H1 (cell line): ENCODE measurements at regions of chr6 and their contacts with region 1.

Region 1: GRCh38 chr6:87641065-87641692 is 51.2 kb downstream of the ORC3 start:
- DNase-seq: no peak
- H3K4me3 ChIP-seq: no peak overlapping the region
- H3K27ac ChIP-seq: no peak overlapping the region
- H3K4me1 ChIP-seq: peaks cover 0 to 3% (median 0%) of the 10 kb centered on the region in 4 experiments; a peak in 1 of 7 replicates
- H3K27me3 ChIP-seq: no peaks in the 10 kb centered on the region
- CTCF ChIP-seq: no peak
- EP300 ChIP-seq: no peak
- POLR2A ChIP-seq: no peak
- RAD21 ChIP-seq: no peak

Region 2: GRCh38 chr6:87487555-87487954 is 153.6 kb before region 1 on chr6:
- CTCF ChIA-PET with region 1: no interaction called
- POLR2A ChIA-PET with region 1: no interaction called
- DNase-seq: no peak
- H3K4me3 ChIP-seq: no peak overlapping the region
- H3K27ac ChIP-seq: no peak overlapping the region
- H3K4me1 ChIP-seq: peaks cover 7 to 14% (median 9%) of the 10 kb centered on the region in 4 experiments
- H3K27me3 ChIP-seq: no peaks in the 10 kb centered on the region
- CTCF ChIP-seq: no peak
- EP300 ChIP-seq: no peak
- POLR2A ChIP-seq: no peak
- RAD21 ChIP-seq: no peak

Region 3: GRCh38 chr6:87653074-87653962 is 12.1 kb after region 1 on chr6:
- CTCF ChIA-PET with region 1: interaction called, 4 read pairs
- POLR2A ChIA-PET with region 1: interaction called, 12 read pairs
- DNase-seq: no peak
- H3K4me3 ChIP-seq: peak overlapping the region in 1 of 4 experiments; percentile 31; a peak in 1 of 8 replicates
- H3K27ac ChIP-seq: no peak overlapping the region
- H3K4me1 ChIP-seq: peaks cover 0 to 15% (median 9%) of the 10 kb centered on the region in 4 experiments; a peak in 4 of 7 replicates
- H3K27me3 ChIP-seq: no peaks in the 10 kb centered on the region
- CTCF ChIP-seq: no peak
- EP300 ChIP-seq: no peak
- POLR2A ChIP-seq: no peak
- RAD21 ChIP-seq: no peak